ENCODE measurements at regions of chr12 and their contacts with region 1.

Region 1: GRCh38 chr12:56029666-56030293 is 8.9 kb downstream of the IKZF4 start:
- DNase-seq: peak; percentile 63 to 82 (median 75)
- H3K4me3 ChIP-seq: no peak overlapping the region
- H3K27ac ChIP-seq: no peak overlapping the region
- H3K4me1 ChIP-seq: no peaks in the 10 kb centered on the region
- H3K27me3 ChIP-seq: no peaks in the 10 kb centered on the region

Region 2: DNA sequence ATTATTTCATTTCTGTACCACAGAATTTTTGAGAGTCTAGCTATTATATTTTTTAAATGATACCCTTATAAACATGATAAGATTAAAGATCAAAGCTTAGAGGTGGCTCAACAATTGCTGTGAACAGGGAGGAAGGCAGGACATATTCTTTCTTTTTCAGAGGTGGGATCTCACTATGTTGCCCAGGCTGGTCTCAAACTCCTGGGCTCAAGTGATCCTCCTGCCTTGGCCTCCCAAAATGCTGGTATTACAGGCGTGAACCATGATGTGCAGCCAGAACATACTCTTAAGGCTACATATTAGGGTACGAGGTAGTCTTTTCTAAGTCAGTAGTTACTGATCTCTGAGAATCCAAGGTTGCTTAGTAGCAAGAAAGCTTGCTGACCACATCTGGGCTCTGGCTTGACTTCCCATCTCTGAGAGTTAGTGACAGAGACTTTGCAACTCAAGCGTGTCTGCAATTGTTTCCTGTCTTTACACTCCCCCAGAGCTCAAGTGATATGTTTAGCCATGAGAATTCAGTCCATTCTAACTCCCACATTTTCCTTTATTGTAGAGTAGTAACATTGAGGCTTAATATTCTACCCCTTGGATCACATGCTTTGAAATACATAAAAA is 47.4 kb before region 1 on chr12:
- CTCF ChIA-PET with region 1: interaction called, 19 read pairs
- POLR2A ChIA-PET with region 1: no interaction called
- DNase-seq: peak in 2 of 3 donors; percentile 16
- H3K4me3 ChIP-seq: no peak overlapping the region
- H3K27ac ChIP-seq: no peak overlapping the region
- H3K4me1 ChIP-seq: peaks cover 2 to 29% (median 5%) of the 10 kb centered on the region in 4 experiments
- H3K27me3 ChIP-seq: no peaks in the 10 kb centered on the region

Region 3: GRCh38 chr12:56007564-56008559 is 21.9 kb before region 1 on chr12:
- CTCF ChIA-PET with region 1: interaction called, 290 read pairs
- POLR2A ChIA-PET with region 1: no interaction called
- DNase-seq: peak in 2 of 3 donors; percentile 33 to 42
- H3K4me3 ChIP-seq: peak overlapping the region; percentile 55 to 88 (median 73)
- H3K27ac ChIP-seq: peak overlapping the region in 1 of 2 experiments; percentile 67
- H3K4me1 ChIP-seq: peaks cover 5 to 27% (median 15%) of the 10 kb centered on the region in 4 experiments
- H3K27me3 ChIP-seq: no peaks in the 10 kb centered on the region

Region 4: DNA sequence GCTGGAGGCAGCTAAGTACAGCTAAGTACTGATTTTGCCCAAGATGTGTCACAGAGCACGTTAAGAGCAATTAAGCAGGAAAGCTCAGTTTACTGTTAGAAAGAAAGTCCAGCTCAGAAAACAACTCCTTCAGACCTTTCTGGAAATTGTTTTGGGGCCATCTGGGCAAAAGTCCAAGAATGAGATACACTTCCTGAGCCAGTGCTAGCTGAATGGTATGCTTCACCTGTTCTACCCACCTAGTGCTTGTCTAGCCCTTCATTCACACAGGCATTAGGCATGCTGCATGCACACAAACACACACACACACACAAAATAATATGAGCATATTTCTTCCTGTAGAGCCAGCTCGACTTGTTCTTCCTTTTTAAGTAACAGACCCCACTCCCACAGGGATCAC is 15.6 kb before region 1 on chr12:
- CTCF ChIA-PET with region 1: interaction called, 23 read pairs
- POLR2A ChIA-PET with region 1: no interaction called
- DNase-seq: no peak
- H3K4me3 ChIP-seq: no peak overlapping the region
- H3K27ac ChIP-seq: no peak overlapping the region
- H3K4me1 ChIP-seq: no peaks in the 10 kb centered on the region
- H3K27me3 ChIP-seq: no peaks in the 10 kb centered on the region

Region 5: GRCh38 chr12:56041552-56042429 is 12.0 kb after region 1 on chr12 and contains the start of gene RPS26:
- CTCF ChIA-PET with region 1: interaction called, 19 read pairs
- POLR2A ChIA-PET with region 1: no interaction called
- DNase-seq: peak; percentile 99 to 100 (median 100)
- H3K4me3 ChIP-seq: peak within 1 kb of the TSS; percentile 89 to 99 (median 97)
- H3K27ac ChIP-seq: peak within 1 kb of the TSS; percentile 92 to 97
- H3K4me1 ChIP-seq: peaks cover 6 to 24% (median 15%) of the 10 kb centered on the region in 4 experiments
- H3K27me3 ChIP-seq: no peaks in the 10 kb centered on the region

Region 6: GRCh38 chr12:56071648-56072047 is 41.9 kb after region 1 on chr12:
- CTCF ChIA-PET with region 1: no interaction called
- POLR2A ChIA-PET with region 1: no interaction called
- DNase-seq: no peak
- H3K4me3 ChIP-seq: no peak overlapping the region
- H3K27ac ChIP-seq: no peak overlapping the region
- H3K4me1 ChIP-seq: no peaks in the 10 kb centered on the region
- H3K27me3 ChIP-seq: no peaks in the 10 kb centered on the region